Breast epithelium (tissue), 4 donors: ENCODE measurements at regions of chr10 and their contacts with region 1.

Region 1: DNA sequence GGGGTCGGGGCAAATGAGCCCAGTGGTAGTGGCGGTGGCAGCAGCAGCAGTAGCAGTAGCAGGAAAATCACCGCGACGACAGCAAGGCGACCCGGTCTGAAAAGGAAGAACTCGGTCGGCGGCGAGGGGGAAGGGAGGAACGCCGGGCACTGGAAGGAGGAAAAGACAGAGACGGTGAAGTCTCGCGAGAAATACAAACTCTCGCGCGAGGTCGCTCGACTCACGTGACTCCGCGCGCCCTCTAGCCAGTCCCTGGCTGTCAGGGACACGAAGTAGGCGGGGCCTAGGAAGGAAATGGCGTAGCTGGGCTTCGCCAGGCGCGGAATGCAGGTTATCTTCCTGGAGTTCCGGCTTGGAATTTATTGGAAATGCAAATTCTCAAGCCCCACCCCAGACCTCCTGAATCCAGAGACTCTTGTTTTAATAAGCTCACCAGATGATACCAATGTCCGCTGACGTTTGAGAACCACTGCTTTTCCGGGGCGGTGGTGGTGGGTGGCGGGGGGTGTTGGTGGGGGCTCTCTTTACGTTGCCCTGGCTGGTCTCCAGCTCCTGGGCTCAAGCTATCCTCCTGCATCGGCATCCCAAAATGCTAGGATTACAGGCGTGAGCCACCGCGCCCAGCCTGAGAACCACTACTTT is at the start of gene SMNDC1:
- DNase-seq: peak; percentile 97 to 98
- H3K4me3 ChIP-seq: peak within 1 kb of the TSS; percentile 80 to 97 (median 86)
- H3K27ac ChIP-seq: peak within 1 kb of the TSS; percentile 88 to 94
- H3K4me1 ChIP-seq: peaks cover 0 to 24% of the 10 kb centered on the region in 2 donors
- H3K27me3 ChIP-seq: no peaks in the 10 kb centered on the region
- CTCF ChIP-seq: no peak
- POLR2A ChIP-seq: peak; percentile 48
- total RNA-seq, gene SMNDC1: 11.5 to 16.0 (median 13.4) TPM

Region 2: DNA sequence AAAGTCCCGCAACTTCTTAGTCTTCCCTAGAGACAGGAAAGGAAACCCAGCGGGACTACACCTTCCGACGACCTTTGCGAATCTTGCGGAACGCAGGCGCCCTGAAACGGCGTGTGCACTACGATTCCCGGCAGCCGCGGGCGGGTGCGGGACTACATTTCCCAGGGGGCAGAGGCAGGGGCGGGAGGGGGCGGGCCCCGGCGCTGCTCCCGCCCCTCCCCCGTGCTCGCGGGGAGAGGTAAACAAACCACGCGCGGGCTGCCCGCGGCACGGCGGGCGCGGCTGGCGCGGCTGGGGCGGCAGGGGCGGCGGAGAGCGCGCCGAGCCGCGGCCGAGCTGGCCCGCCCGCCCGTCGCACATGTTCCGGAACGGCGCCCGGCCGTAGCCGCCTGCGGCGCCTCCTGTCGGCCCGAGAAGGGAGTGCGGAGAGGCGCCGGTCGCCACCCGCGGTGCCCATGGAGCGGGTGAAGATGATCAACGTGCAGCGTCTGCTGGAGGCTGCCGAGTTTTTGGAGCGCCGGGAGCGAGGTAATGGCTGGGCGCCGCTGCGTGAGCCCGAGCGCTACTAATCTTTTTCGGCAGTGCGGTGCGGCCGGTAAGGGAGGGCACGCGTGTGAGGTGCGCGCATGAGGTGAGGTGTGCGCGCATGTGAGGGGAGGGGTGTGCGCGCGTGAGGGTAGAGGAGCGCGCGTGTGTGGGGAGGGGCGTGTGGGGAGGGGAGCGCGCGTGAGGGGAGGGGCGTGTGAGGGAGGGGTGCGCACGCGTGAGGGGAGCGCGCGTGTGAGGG is 79.0 kb before region 1 on chr10:
- intact Hi-C with region 1: loop called (anchors 2 kb)
- DNase-seq: peak; percentile 92 to 93
- H3K4me3 ChIP-seq: peak overlapping the region; percentile 65 to 96 (median 80)
- H3K27ac ChIP-seq: peak overlapping the region; percentile 91 to 98
- H3K4me1 ChIP-seq: no peaks in the 10 kb centered on the region
- H3K27me3 ChIP-seq: no peaks in the 10 kb centered on the region
- CTCF ChIP-seq: peak; percentile 61 to 66 (median 64)
- POLR2A ChIP-seq: no peak

Region 3: DNA sequence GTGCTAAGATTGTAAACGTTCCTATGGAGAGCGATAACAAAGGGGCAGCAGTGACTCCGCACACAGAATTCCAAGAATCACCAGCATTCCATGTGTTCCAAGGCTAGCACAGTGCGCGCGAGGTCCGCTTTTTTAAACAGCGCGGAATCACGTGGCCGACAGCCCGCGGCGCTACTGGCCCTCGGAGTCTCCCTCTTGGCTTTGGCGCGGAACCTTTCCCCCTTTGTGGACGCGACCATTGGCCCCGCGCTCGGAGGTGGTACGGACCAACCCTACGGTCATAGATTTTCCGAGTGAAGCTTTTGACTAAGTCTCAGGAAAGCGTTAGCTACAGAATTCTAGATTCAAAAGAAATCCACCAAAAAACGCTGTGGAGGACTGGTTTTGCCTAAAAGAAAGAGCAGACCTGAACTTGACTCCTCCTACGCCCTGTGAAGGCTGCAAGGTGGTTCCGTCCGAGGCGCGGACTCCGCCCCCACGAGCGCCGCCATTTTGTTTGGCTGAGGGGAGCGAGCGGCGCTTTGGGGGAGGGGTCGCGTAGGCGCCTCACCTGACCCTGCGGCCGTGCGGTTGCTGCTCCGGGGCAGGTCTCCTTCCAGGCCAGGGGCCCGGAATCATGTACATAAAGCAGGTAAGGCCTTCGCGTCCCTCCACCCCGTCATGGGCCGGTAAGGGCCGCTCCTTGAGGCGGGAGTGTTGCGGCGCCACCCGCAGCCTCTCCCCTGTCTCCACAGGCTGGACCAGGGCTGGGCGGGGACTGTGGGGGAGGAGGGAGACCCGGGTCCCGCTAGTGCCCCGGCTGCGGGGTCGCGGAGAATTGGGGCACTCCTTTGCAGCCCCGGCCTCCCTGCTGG is 262.5 kb after region 1 on chr10 and contains the start of gene SMC3:
- intact Hi-C with region 1: loop called (anchors 10 kb)
- DNase-seq: peak; percentile 81 to 86
- H3K4me3 ChIP-seq: peak within 1 kb of the TSS; percentile 90 to 99 (median 97)
- H3K27ac ChIP-seq: peak within 1 kb of the TSS; percentile 90 to 92
- H3K4me1 ChIP-seq: no peaks in the 10 kb centered on the region
- H3K27me3 ChIP-seq: no peaks in the 10 kb centered on the region
- CTCF ChIP-seq: peak in 1 of 3 donors; percentile 17
- POLR2A ChIP-seq: no peak
- total RNA-seq, gene SMC3: 26.6 to 37.8 (median 37.0) TPM